ENCODE measurements at regions of chr11 and their contacts with region 1.

Region 1: DNA sequence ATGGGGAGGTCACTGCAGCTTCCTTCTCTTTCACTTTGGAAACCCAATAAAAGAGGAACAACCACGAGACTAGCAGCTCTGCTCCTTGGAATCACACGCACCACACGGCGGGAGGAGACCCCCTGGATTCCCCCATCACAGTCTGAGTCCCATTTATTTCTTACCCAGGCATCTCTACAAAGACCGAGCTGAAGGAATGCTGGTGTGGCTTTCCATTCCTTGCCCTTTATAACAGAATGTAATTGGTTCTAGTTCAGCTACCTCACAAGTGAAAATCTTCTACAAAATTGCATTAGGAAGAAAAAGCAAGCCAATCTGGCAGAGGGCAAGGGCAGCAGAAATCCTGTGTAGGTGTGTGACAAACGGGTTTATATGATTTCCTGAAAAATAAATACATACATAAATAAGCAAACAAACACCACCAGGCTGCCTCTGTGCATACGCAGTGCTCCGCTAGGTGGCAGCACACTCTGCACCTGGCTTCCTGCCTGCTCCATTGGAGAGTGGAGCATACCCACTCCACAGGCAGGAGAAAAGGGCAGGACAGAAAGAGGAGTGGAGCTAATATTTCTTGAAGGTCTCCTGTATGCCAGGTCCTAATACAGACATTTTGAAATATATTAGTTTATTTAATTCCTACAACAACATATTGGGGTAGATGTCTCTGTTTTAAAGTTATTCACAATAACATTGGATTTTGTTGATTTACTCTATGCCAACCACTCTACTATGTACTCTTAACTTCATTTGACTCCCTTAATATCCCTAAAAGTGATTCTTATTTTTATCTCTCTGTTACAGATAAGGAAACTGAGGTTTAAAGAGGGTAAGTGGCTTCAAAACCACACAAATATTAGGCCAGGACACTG is 673.1 kb downstream of the KCNA4 start:
- DNase-seq: peak; percentile 80
- ATAC-seq: peak; percentile 100
- H3K4me3 Mint-ChIP-seq: no peak overlapping the region
- H3K27ac Mint-ChIP-seq: no peak overlapping the region
- H3K4me1 Mint-ChIP-seq: no peaks in the 10 kb centered on the region
- H3K27me3 Mint-ChIP-seq: peaks cover 13% of the 10 kb centered on the region
- CTCF ChIP-seq: peak; percentile 95

Region 2: GRCh38 chr11:29093416-29094120 is 250.1 kb before region 1 on chr11:
- CTCF ChIA-PET with region 1: no interaction called
- POLR2A ChIA-PET with region 1: no interaction called
- DNase-seq: no peak
- ATAC-seq: no peak
- H3K4me3 Mint-ChIP-seq: no peak overlapping the region
- H3K27ac Mint-ChIP-seq: no peak overlapping the region
- H3K4me1 Mint-ChIP-seq: no peaks in the 10 kb centered on the region
- H3K27me3 Mint-ChIP-seq: no peaks in the 10 kb centered on the region
- CTCF ChIP-seq: no peak

Region 3: DNA sequence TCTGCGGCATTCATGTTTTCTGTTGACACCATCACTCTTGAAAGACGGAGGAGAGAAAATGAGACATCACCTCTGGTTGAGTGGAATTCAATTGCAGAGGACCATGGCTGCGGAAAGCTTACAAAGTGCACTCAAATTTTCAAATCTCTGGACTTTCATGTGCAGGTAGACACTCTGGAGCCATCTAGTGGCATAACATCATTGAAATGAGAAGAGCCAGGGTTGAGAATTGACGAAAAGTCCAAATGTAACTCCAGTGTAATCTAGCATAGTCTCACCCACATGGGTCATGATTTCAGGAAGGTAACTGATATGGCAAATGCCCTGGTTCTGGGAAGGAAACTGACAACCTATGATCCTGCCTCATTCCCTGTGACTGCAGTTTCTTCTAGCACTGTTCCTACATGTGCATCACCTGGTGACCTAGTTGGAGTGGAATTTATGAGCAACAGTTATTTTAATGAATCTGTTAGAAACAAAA is 14.7 kb before region 1 on chr11:
- CTCF ChIA-PET with region 1: interaction called, 16 read pairs
- POLR2A ChIA-PET with region 1: interaction called, 3 read pairs
- DNase-seq: no peak
- ATAC-seq: peak; percentile 47; the same call in 1 of the 2 replicates
- H3K4me3 Mint-ChIP-seq: no peak overlapping the region
- H3K27ac Mint-ChIP-seq: no peak overlapping the region
- H3K4me1 Mint-ChIP-seq: no peaks in the 10 kb centered on the region
- H3K27me3 Mint-ChIP-seq: no peaks in the 10 kb centered on the region; the same call in 1 of the 2 replicates
- CTCF ChIP-seq: no peak

Measured in WTC11 (cell line).